A549 (cell line): ENCODE measurements at regions of chr10 and their contacts with region 1.

Region 1: DNA sequence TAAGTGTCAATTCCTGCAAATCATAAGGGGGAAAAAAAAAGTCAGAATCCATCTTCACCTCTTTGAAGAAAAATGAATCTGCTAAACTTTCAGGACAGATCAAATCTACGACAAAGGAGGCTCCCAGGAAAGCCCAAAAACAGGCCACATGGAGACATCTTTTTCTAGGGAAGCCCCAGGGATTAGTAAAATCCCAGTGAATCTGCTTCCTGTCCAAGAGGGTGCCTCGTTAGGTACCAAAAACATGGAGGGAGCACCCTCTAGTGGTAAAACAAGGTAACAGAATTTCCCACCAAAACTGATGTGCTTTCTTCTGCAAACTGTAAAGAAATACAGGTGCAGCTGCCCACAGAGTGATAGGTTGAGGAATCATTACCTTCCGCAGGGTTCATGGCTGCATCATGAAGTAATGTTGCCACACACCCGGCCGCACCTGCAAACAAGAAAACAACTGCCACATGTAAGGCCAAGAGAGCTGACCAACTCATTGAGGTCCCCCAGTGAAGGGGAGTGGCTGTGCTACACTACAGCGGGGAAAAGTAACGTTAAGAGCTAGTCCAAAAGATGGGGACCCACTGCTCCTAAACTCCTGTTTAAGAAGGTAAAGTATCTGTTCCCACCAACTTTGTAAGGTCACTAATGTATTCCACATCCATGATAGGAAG is 7.9 kb downstream of the SLC25A28 start:
- DNase-seq: peak; percentile 68 to 77
- ATAC-seq: peak; percentile 87 to 90
- H3K4me3 ChIP-seq: no peak overlapping the region
- H3K27ac ChIP-seq: no peak overlapping the region
- H3K4me1 ChIP-seq: peaks cover 4% of the 10 kb centered on the region; the same call in 2 of the 3 replicates
- CTCF ChIP-seq: peak; percentile 91
- EP300 ChIP-seq: no peak
- POLR2A ChIP-seq: no peak
- RAD21 ChIP-seq: peak; percentile 88

Region 2: DNA sequence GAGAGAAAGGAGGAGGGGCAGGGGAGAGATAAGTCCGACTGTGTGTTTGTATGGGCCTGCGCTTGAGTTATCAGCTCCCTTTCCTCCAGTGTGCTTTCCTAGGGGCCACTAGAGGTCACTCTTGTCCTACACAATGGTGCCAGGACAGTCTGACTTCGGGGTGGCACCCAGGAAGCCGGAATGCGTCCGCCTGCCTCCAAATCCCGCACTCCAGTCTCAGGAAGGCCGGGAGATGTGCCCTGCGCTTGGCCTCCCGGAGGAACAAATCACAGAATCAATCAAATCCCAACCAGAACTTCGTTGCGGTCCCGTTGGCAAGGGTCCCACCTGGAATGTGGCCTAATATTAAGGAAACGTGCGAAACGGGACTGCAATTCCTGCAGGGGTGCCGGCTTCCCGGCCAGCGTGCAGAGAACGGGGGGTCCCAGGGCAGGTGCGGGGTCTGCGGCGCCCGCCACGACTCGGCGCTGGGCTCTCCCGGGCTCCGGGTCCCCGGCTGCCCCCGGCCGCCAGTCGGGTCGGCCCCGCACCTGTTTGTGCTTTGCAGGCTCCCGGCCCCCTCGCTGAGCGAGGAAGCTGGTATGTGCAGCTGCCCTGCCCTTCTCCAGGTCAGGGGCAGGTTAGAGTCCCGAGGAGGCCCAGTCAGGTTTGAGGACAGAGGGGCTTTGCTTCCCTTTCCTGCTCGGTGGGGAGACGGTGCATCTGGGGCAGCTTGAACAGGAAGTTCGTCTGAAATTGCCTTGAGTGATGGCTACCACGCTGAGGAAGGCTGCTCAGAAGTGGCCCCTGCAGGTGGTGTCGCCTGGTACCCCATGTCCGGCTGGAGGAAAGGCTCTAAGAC is 1144.6 kb before region 1 on chr10:
- CTCF ChIA-PET with region 1: interaction called, 11 read pairs
- POLR2A ChIA-PET with region 1: no interaction called
- DNase-seq: peak; percentile 90
- ATAC-seq: peak; percentile 93 to 99
- H3K4me3 ChIP-seq: peak overlapping the region; percentile 76
- H3K27ac ChIP-seq: peak overlapping the region; percentile 78 to 85
- H3K4me1 ChIP-seq: no peaks in the 10 kb centered on the region
- CTCF ChIP-seq: peak; percentile 92
- EP300 ChIP-seq: no peak
- POLR2A ChIP-seq: no peak
- RAD21 ChIP-seq: peak; percentile 96 to 97

Region 3: DNA sequence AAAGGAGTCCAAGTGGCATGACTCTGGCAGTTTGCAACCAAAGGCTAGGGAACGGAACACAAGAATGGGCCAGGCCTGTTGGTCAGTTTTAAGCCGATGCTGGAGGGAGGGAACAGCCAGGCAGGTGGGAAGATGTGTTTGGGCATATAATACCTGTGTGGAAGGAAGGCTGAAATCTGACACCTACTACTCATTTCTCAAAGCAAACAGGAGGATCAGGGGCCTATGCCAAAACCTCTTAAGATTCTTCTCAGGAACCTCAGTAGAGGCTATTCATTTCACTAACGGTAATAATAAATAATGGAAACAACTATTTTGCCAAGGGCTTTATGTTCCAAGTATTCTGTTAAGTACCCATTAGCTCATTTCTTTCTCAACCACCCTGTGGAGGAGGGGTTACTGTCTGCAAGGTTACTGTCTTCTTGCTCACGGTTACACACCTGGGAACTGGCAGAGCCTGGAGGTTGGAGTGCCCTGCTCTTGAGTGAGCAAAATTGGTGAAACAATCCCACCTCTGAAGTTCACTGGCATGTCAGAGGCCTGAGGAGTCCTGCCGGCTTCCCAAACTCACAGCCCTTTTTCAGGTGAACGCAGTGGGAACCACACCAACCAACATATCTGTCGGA is 217.4 kb before region 1 on chr10:
- CTCF ChIA-PET with region 1: interaction called, 53 read pairs
- POLR2A ChIA-PET with region 1: no interaction called
- DNase-seq: no peak
- ATAC-seq: no peak
- H3K4me3 ChIP-seq: no peak overlapping the region
- H3K27ac ChIP-seq: no peak overlapping the region
- H3K4me1 ChIP-seq: peaks cover 5% of the 10 kb centered on the region; the same call in 1 of the 3 replicates
- CTCF ChIP-seq: no peak
- EP300 ChIP-seq: no peak
- POLR2A ChIP-seq: no peak
- RAD21 ChIP-seq: no peak

Region 4: GRCh38 chr10:99403674-99404073 is 208.6 kb before region 1 on chr10:
- CTCF ChIA-PET with region 1: interaction called, 10 read pairs
- POLR2A ChIA-PET with region 1: no interaction called
- DNase-seq: no peak
- ATAC-seq: no peak
- H3K4me3 ChIP-seq: no peak overlapping the region
- H3K27ac ChIP-seq: no peak overlapping the region
- H3K4me1 ChIP-seq: no peaks in the 10 kb centered on the region
- CTCF ChIP-seq: no peak
- EP300 ChIP-seq: no peak
- POLR2A ChIP-seq: no peak
- RAD21 ChIP-seq: no peak

Region 5: DNA sequence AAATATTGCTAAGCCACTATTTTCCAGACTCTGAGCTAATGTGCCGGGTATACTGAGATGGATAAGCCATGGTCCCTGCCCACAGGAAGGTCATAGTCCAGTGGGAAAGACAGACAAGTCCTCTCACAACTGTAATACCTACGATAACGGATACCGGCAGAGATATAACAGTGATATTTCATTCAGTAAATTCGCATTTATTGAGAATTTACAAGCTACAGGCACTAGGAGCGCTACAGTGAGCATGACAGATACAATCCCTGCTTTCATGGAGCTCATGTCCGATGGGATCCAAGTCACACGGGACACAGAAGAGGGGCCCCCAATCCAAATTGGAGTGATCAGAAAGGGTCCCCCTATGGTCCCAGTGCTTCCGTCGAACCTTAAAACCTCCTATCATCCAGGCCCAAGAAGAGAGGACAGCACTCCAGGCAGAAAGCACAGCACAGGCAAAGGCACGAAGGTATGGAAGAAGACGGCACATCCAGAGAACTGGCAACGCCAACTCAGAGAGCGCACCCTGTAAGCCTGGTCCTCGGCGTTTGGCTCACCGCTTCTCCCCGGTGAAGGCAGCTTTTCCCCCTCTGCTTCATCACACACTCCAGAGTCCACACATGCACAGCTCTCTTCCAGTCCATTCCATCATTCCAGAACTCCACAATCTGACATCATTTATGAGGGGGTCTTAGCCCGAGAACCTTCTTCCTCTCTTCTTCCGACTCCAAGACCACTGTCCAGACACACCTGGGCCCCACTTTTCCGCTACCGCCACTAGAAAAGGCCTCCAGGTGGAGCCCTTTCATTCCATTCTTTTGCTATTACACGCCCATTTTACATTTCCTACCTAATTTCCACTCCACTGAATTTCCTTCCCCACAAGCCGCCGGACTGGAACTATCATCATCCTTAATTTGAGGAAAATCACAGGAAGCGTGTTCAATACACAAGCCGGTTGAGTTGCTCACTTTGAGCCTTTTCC is 127.4 kb before region 1 on chr10:
- CTCF ChIA-PET with region 1: interaction called, 35 read pairs
- POLR2A ChIA-PET with region 1: no interaction called
- DNase-seq: peak; percentile 17 to 18
- ATAC-seq: peak; percentile 81 to 84
- H3K4me3 ChIP-seq: no peak overlapping the region
- H3K27ac ChIP-seq: no peak overlapping the region
- H3K4me1 ChIP-seq: no peaks in the 10 kb centered on the region
- CTCF ChIP-seq: peak; percentile 46
- EP300 ChIP-seq: no peak
- POLR2A ChIP-seq: no peak
- RAD21 ChIP-seq: peak; percentile 45 to 52; a peak in 4 of 5 replicates

Region 6: GRCh38 chr10:99582255-99582770 is 30.0 kb before region 1 on chr10:
- CTCF ChIA-PET with region 1: interaction called, 16 read pairs
- POLR2A ChIA-PET with region 1: no interaction called
- DNase-seq: no peak
- ATAC-seq: no peak
- H3K4me3 ChIP-seq: no peak overlapping the region
- H3K27ac ChIP-seq: no peak overlapping the region
- H3K4me1 ChIP-seq: no peaks in the 10 kb centered on the region
- CTCF ChIP-seq: no peak
- EP300 ChIP-seq: no peak
- POLR2A ChIP-seq: no peak
- RAD21 ChIP-seq: no peak

Region 7: DNA sequence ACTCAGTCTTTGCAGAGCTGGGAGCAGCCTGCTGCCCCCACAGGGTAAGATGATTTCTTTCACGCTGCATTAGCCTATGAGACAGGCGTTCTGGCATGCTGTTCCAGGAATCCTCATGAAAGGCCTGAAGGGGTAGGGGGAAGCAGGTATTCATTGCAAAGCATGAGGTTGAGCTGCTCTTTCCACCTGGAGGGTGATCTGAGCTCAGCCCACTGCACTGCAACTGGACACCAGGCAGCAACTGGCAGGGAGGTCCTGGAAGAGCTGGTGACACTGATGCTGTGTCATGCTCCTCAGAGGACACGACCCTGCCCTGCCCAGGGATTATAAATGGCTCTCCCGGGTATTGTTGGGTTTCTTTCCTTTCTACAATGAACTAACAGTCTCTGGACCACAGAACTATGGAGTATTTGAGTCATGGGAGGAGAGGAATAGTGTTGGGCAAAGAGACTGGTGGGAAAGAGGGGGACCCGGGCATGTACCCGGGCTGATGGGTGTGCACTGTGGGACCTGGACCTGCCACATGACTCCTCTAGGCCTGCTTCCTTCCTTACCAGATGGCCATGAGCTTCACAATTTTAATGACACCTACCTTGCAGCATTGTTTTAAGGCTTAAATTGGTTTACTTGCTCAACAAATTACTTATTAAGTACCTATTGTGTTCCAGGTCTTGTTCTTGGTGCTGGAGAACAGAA is 16.4 kb before region 1 on chr10:
- CTCF ChIA-PET with region 1: interaction called, 21 read pairs
- POLR2A ChIA-PET with region 1: no interaction called
- DNase-seq: peak in 1 of 2 experiments; percentile 52
- ATAC-seq: peak; percentile 58 to 63; a peak in 3 of 6 replicates
- H3K4me3 ChIP-seq: no peak overlapping the region
- H3K27ac ChIP-seq: peak overlapping the region in 1 of 2 experiments; percentile 18; a peak in 1 of 6 replicates
- H3K4me1 ChIP-seq: peaks cover 16% of the 10 kb centered on the region
- CTCF ChIP-seq: no peak
- EP300 ChIP-seq: no peak
- POLR2A ChIP-seq: no peak
- RAD21 ChIP-seq: no peak

Region 8: GRCh38 chr10:99732033-99732912 is 120.0 kb after region 1 on chr10 and contains the starts of genes COX15 and CUTC:
- CTCF ChIA-PET with region 1: no interaction called
- POLR2A ChIA-PET with region 1: no interaction called
- DNase-seq: peak; percentile 88 to 97
- ATAC-seq: peak; percentile 88 to 94
- H3K4me3 ChIP-seq: peak within 1 kb of the TSS; percentile 69
- H3K27ac ChIP-seq: peak within 1 kb of the TSS; percentile 89 to 92
- H3K4me1 ChIP-seq: peaks cover 22% of the 10 kb centered on the region
- CTCF ChIP-seq: no peak; the same call in 2 of the 3 replicates
- EP300 ChIP-seq: no peak
- POLR2A ChIP-seq: peak; percentile 65
- RAD21 ChIP-seq: peak; percentile 31 to 37; a peak in 2 of 5 replicates
- polyA plus RNA-seq, gene COX15: 54.4 and 54.7 TPM in 2 replicates
- polyA plus RNA-seq, gene CUTC: 48.3 and 66.5 TPM in 2 replicates